CD4-positive, alpha-beta T cell (primary cell): ENCODE measurements at regions of chr13 and their contacts with region 1.

Region 1: GRCh38 chr13:38670627-38671026 is 16.2 kb upstream of the FREM2 start:
- DNase-seq: no peak
- ATAC-seq: no peak
- H3K4me3 ChIP-seq: no peak overlapping the region
- H3K4me3 Mint-ChIP-seq: no peak overlapping the region
- H3K27ac ChIP-seq: no peak overlapping the region
- H3K27ac Mint-ChIP-seq: no peak overlapping the region
- H3K4me1 ChIP-seq: no peaks in the 10 kb centered on the region
- H3K4me1 Mint-ChIP-seq: no peaks in the 10 kb centered on the region
- H3K27me3 ChIP-seq: no peaks in the 10 kb centered on the region
- H3K27me3 Mint-ChIP-seq: peaks cover 5% of the 10 kb centered on the region
- CTCF ChIP-seq: no peak

Region 2: DNA sequence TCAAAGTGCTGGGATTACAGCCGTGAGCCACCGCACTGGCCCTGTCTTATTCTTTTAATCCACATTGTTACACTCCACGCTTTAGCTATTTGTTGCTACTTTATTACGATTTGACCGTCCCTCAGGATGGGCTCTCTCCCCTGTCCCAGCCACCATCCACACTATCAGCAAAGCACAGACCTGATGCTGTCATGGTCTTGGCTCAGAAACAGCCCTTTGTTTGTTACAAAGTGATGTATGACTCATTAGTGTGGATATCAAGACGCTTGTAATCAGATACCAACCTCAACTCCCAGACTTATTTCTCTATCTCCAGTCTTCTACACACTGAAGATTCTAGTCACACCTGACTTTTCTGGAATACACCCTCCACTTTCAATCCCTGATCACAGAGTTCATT is 68.4 kb before region 1 on chr13:
- CTCF ChIA-PET with region 1: no interaction called
- POLR2A ChIA-PET with region 1: no interaction called
- intact Hi-C with region 1: no loop called
- DNase-seq: no peak
- ATAC-seq: no peak
- H3K4me3 ChIP-seq: no peak overlapping the region
- H3K4me3 Mint-ChIP-seq: no peak overlapping the region
- H3K27ac ChIP-seq: no peak overlapping the region
- H3K27ac Mint-ChIP-seq: no peak overlapping the region
- H3K4me1 ChIP-seq: no peaks in the 10 kb centered on the region
- H3K4me1 Mint-ChIP-seq: no peaks in the 10 kb centered on the region
- H3K27me3 ChIP-seq: no peaks in the 10 kb centered on the region
- H3K27me3 Mint-ChIP-seq: peaks cover 3% of the 10 kb centered on the region
- CTCF ChIP-seq: no peak

Region 3: GRCh38 chr13:38735721-38736440 is 65.3 kb after region 1 on chr13:
- CTCF ChIA-PET with region 1: no interaction called
- POLR2A ChIA-PET with region 1: no interaction called
- intact Hi-C with region 1: loop called in 1 of 2 experiments (anchors 2 kb)
- DNase-seq: no peak
- ATAC-seq: no peak
- H3K4me3 ChIP-seq: no peak overlapping the region
- H3K4me3 Mint-ChIP-seq: no peak overlapping the region
- H3K27ac ChIP-seq: no peak overlapping the region
- H3K27ac Mint-ChIP-seq: no peak overlapping the region
- H3K4me1 ChIP-seq: no peaks in the 10 kb centered on the region
- H3K4me1 Mint-ChIP-seq: no peaks in the 10 kb centered on the region
- H3K27me3 ChIP-seq: no peaks in the 10 kb centered on the region
- H3K27me3 Mint-ChIP-seq: peaks cover 6% of the 10 kb centered on the region
- CTCF ChIP-seq: no peak